ENCODE measurements at regions of chr7 and their contacts with region 1.

Region 1: DNA sequence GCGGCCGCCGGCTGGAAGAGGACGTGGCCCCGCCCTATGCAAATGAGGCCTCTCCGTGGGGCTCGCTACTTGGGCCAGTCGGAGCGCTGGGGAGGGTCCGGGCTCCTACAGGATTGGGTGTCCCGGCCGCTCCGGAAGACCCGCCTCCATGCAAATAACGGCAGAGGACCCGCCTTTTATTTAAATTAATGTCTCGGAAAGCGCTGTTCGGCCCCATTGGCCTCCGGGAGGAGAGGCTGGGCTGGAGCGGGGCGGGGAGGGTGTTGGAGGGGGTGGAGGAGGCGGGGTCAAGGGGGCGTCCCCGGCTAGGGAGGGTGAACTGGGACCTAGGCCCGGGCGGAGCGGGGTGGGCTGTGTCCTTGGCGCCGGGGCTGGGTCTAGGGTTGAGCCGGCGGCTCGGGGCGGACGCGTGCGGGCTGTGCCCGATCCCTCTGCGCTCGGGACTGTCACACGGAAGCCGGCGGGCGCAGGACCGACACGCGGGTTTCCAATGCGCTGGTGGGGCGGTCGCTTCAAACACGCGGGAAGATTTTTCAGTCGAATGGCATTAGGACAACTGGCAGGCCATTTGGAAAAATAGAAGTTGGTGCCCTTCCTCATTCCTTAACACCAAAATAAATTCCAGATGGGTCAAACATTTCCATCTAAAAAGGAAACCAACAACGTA is 344 bp upstream of the POLM start:
- DNase-seq: peak; percentile 99
- ATAC-seq: peak; percentile 95
- H3K4me3 Mint-ChIP-seq: peak overlapping the region; percentile 70
- H3K27ac Mint-ChIP-seq: peak overlapping the region; percentile 79
- H3K4me1 Mint-ChIP-seq: peaks cover 36% of the 10 kb centered on the region
- H3K27me3 Mint-ChIP-seq: no peaks in the 10 kb centered on the region

Region 2: GRCh38 chr7:44044315-44045225 is 38.1 kb before region 1 on chr7 and contains the start of gene DBNL:
- CTCF ChIA-PET with region 1: interaction called, 3 read pairs
- POLR2A ChIA-PET with region 1: no interaction called
- intact Hi-C with region 1: loop called (anchors 1 to 2 kb)
- DNase-seq: peak; percentile 95
- ATAC-seq: peak; percentile 72
- H3K4me3 Mint-ChIP-seq: peak within 1 kb of the TSS; percentile 88
- H3K27ac Mint-ChIP-seq: peak within 1 kb of the TSS; percentile 93
- H3K4me1 Mint-ChIP-seq: peaks cover 52% of the 10 kb centered on the region
- H3K27me3 Mint-ChIP-seq: no peaks in the 10 kb centered on the region
- total RNA-seq, gene DBNL: 106 to 117 TPM

Region 3: DNA sequence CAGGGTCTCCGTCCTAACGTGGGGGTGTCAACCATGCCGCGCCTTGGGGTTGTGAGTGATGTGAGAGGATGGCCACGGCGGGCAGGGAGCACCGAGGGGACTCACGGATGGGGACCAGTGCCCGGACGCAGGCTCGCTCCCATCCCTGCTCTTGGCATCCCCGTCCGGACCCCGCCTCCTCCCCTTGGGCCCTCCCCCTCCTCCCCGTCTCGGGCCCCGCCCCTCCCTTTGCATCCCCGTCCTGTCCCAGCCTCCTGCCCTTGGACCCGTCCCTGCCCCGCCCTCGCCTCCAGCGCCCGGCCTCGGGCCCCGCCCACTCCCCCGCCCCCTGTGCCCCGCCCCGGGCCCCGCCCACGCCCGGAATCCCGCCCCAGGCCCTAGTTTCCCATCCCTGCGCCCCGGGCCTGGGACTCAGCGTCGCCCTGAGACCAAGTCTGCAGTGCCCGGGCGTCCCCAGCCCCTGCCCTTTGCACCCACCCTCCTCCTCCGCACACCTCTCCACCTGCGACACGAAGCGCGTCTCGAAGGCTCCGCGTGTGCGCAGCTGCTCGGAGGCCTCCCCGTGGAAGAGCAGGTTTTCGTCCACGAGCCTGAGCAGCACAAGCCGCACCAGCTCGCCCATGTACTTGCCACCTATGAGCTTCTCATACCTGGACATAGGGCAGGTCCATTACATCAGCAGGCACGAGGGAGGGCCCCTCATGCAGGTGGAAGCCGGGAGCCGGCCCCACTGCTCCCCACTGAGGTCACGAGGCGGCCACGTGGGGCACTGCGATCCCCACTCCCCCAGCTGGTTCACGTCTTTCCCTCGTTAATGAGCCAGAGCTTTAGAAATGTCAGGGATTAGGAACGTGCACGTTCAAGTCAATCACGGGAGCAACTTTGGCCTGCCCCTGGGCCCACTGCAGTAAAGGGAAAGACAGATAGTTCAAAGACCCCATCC is 63.6 kb after region 1 on chr7:
- CTCF ChIA-PET with region 1: no interaction called
- POLR2A ChIA-PET with region 1: no interaction called
- intact Hi-C with region 1: loop called in 1 of 2 experiments (anchors 1 kb)
- DNase-seq: peak; percentile 86
- ATAC-seq: peak; percentile 91
- H3K4me3 Mint-ChIP-seq: peak overlapping the region; percentile 64
- H3K27ac Mint-ChIP-seq: no peak overlapping the region
- H3K4me1 Mint-ChIP-seq: peaks cover 6% of the 10 kb centered on the region
- H3K27me3 Mint-ChIP-seq: peaks cover 3% of the 10 kb centered on the region

Region 4: DNA sequence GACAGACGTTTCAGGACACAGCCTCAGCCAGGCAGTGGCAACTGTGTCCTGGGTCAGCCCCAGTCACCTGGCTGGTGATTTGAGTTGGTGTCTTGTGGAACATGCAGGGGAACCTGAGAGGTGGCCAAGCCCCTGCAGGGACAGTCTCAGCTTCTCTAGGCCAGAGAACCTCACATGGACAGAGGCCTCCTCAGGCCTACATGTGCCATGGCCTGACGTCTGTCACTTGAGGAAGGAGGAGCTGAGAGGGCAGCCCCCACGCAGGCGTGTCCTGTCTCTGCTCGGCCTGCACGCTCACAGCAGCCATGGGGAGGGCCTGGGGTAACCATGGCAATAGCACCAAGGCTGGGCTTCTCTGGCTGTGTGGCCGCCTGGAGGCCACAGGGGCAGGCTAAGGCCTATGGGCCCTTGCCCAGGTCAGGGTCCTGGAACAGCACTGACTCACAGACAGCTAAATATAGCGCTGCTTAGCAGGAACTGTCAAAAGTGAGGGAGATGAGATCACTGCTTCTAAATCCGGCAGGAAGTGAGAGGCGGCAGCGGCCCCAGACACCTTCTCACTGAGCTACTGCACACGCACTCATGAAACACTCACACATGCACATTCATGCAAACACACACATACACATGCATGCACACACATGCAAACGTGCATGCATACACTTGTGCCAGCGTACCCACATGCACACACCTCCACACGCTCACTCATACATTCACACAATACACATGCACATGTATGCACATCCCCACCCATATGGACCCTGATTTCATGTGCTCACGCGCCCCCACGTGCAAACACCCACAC is 175.1 kb after region 1 on chr7:
- CTCF ChIA-PET with region 1: no interaction called
- POLR2A ChIA-PET with region 1: no interaction called
- intact Hi-C with region 1: loop called in 1 of 2 experiments (anchors 5 kb)
- DNase-seq: peak; percentile 90
- ATAC-seq: peak; percentile 91
- H3K4me3 Mint-ChIP-seq: peak overlapping the region; percentile 30
- H3K27ac Mint-ChIP-seq: peak overlapping the region; percentile 90
- H3K4me1 Mint-ChIP-seq: peaks cover 46% of the 10 kb centered on the region
- H3K27me3 Mint-ChIP-seq: no peaks in the 10 kb centered on the region

Region 5: DNA sequence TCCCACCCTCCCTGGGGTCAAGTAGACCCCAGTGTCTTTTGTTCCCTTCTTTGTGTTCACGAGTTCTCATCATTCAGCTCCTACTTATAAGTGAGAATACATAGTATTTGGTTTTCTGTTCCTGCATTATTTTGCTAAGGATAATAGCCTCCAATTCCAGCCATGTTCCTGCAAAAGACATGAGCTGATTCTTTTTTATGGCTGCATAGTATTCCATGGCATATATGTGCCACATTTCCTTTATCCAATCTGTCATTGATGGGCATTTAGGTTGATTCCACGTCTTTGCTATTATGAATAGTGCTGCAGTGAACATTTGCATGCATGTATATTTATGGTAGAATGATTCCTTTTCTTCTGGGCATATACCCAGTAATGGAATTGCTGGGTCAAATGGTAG is 271.0 kb after region 1 on chr7:
- CTCF ChIA-PET with region 1: no interaction called
- POLR2A ChIA-PET with region 1: no interaction called
- intact Hi-C with region 1: no loop called
- DNase-seq: no peak
- ATAC-seq: no peak
- H3K4me3 Mint-ChIP-seq: no peak overlapping the region
- H3K27ac Mint-ChIP-seq: no peak overlapping the region
- H3K4me1 Mint-ChIP-seq: no peaks in the 10 kb centered on the region
- H3K27me3 Mint-ChIP-seq: peaks cover 31% of the 10 kb centered on the region

Region 6: GRCh38 chr7:44606450-44607254 is 524.0 kb after region 1 on chr7 and contains the start of gene OGDH:
- CTCF ChIA-PET with region 1: no interaction called
- POLR2A ChIA-PET with region 1: no interaction called
- intact Hi-C with region 1: loop called in 1 of 2 experiments (anchors 1 kb)
- DNase-seq: peak; percentile 100
- ATAC-seq: peak; percentile 98
- H3K4me3 Mint-ChIP-seq: peak within 1 kb of the TSS; percentile 92
- H3K27ac Mint-ChIP-seq: peak within 1 kb of the TSS; percentile 97
- H3K4me1 Mint-ChIP-seq: peaks cover 33% of the 10 kb centered on the region
- H3K27me3 Mint-ChIP-seq: no peaks in the 10 kb centered on the region
- total RNA-seq, gene OGDH: 80.3 to 90.1 TPM